CD4-positive, alpha-beta T cell (primary cell): ENCODE measurements at regions of chr3 and their contacts with region 1.

Region 1: DNA sequence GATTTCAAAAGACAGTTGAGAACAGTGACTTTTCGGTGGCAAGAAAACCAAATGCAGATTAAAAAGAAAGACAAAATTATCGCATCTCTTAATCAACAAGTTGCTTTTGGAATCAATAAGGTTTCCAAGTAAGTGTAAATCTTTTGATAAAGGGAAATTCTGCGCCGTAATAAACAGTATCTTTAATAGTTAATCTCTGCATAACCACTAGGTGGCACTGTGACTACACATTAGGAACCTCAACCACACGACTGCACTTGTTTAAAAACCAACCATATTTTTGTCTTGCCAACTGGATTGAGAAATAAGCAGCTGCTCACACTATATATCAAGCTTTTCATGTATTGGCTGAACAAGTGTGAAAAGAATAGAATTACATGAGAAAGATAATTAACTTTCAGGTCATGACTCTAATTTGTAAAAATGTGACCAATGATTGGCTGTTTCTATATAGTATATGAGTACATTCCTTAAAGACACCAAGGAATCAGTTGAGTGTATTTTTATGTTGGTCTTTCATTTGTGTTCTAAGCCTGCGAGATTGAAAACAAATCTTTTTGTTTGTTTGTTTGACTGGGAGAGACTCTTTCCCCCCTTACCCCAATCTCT is 72.7 kb downstream of the DZIP3 start:
- DNase-seq: peak in 11 of 14 experiments; percentile 5 to 87 (median 40)
- ATAC-seq: peak; percentile 81
- H3K4me3 ChIP-seq: no peak overlapping the region
- H3K4me3 Mint-ChIP-seq: no peak overlapping the region
- H3K27ac ChIP-seq: no peak overlapping the region
- H3K27ac Mint-ChIP-seq: no peak overlapping the region
- H3K4me1 ChIP-seq: no peaks in the 10 kb centered on the region
- H3K4me1 Mint-ChIP-seq: peaks cover 20% of the 10 kb centered on the region
- H3K27me3 ChIP-seq: no peaks in the 10 kb centered on the region
- H3K27me3 Mint-ChIP-seq: no peaks in the 10 kb centered on the region
- CTCF ChIP-seq: peak; percentile 90

Region 2: DNA sequence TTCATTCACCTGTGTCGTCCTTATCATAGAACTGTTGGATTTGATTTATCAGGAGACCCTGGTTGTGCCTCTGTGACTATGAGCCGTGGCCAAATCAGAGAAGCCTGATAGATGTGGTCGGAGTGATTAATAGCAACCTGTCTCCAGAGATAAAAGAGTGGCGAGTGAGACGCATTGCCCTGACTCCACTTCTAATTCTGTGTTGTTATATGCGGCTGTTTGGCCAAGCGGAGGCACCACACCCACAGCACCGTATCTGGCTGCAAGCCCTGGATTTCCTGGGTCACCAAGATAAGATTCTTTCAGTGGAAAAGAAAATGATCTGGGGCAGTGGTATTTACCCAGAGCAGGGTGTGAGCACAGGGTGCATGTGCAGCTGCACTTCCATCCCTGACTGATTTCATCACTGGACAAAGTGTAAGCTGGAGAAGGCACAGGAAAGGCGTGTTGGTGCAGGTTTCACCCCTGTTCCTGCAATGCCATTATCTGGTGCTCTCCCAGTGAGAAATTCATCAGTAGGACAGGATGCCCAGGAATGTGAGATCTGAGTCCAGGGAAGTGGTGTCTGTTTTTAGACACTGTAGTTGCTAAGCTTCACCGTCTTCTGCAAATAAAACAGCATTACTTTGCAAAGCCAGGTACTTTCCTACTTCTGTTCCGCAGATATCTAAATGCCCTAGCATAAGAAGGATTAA is 656.0 kb before region 1 on chr3:
- CTCF ChIA-PET with region 1: no interaction called
- POLR2A ChIA-PET with region 1: no interaction called
- intact Hi-C with region 1: no loop called
- DNase-seq: no peak
- ATAC-seq: no peak
- H3K4me3 ChIP-seq: no peak overlapping the region
- H3K4me3 Mint-ChIP-seq: no peak overlapping the region
- H3K27ac ChIP-seq: no peak overlapping the region
- H3K27ac Mint-ChIP-seq: no peak overlapping the region
- H3K4me1 ChIP-seq: peaks cover 7% of the 10 kb centered on the region
- H3K4me1 Mint-ChIP-seq: no peaks in the 10 kb centered on the region
- H3K27me3 ChIP-seq: no peaks in the 10 kb centered on the region
- H3K27me3 Mint-ChIP-seq: no peaks in the 10 kb centered on the region
- CTCF ChIP-seq: no peak

Region 3: DNA sequence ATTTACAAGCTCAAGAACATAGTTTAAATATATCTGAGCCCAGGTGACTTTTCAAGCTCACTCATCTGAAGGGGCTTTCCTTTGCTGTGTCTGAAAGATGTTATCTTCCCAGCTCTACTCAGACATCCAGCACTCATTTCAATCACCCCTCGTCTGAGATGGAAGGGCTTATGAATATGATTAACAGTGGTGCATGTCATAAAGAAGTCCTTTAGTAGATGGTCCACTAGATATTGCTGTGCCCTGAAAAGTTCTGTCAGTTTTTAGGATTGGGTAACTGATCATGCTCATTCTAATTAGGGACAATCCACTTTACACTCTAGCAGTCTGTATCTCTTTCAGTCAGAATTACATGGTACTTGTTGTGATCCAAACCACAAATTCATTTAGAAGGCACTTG is 66.7 kb after region 1 on chr3:
- CTCF ChIA-PET with region 1: no interaction called
- POLR2A ChIA-PET with region 1: no interaction called
- intact Hi-C with region 1: no loop called
- DNase-seq: no peak
- ATAC-seq: no peak
- H3K4me3 ChIP-seq: no peak overlapping the region
- H3K4me3 Mint-ChIP-seq: no peak overlapping the region
- H3K27ac ChIP-seq: no peak overlapping the region
- H3K27ac Mint-ChIP-seq: no peak overlapping the region
- H3K4me1 ChIP-seq: no peaks in the 10 kb centered on the region
- H3K4me1 Mint-ChIP-seq: no peaks in the 10 kb centered on the region
- H3K27me3 ChIP-seq: no peaks in the 10 kb centered on the region
- H3K27me3 Mint-ChIP-seq: no peaks in the 10 kb centered on the region
- CTCF ChIP-seq: no peak

Region 4: DNA sequence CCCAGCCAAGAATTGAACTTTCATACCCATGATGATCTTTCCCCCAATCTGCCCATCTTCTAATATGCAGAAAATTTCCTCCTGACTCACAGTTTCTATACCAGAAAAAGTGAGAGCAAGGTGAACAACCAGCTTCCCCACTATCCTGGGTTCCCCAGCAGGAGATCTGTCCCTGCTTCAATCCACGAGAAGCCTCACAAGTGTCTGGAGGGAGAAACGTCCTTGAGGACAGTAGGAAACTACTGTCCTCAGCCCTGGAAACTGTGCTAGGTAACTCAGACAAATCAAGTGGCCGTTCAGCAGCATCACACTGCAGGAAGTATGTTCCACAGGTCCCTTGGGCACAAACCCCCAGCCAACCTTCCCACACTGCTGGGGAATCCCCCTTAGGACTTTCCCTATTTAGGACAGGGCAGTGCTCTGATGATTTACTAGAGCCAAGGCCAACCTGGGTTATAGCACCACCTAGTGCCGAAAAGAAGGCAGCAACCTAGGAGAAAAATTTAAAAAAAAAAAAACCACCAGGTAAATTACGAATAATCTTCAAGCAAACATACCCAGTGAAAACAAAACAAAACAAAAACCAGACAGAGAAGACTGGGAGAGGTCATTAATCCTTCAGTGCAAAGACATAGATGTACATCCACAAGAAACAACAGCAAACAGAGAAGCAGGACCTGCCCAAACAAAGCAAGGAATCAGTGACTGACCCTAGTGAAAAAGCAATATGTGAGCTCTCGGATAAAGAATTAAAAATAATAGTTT is 419.7 kb after region 1 on chr3:
- CTCF ChIA-PET with region 1: no interaction called
- POLR2A ChIA-PET with region 1: no interaction called
- intact Hi-C with region 1: loop called in 1 of 2 experiments (anchors 5 kb)
- DNase-seq: peak in 6 of 14 experiments; percentile 1 to 68 (median 9)
- ATAC-seq: no peak
- H3K4me3 ChIP-seq: no peak overlapping the region
- H3K4me3 Mint-ChIP-seq: no peak overlapping the region
- H3K27ac ChIP-seq: no peak overlapping the region
- H3K27ac Mint-ChIP-seq: no peak overlapping the region
- H3K4me1 ChIP-seq: no peaks in the 10 kb centered on the region
- H3K4me1 Mint-ChIP-seq: no peaks in the 10 kb centered on the region
- H3K27me3 ChIP-seq: peaks cover 0 to 3% of the 10 kb centered on the region in 2 experiments
- H3K27me3 Mint-ChIP-seq: peaks cover 33% of the 10 kb centered on the region
- CTCF ChIP-seq: peak; percentile 61